A673 (cell line): ENCODE measurements at regions of chr4 and their contacts with region 1.

Region 1: DNA sequence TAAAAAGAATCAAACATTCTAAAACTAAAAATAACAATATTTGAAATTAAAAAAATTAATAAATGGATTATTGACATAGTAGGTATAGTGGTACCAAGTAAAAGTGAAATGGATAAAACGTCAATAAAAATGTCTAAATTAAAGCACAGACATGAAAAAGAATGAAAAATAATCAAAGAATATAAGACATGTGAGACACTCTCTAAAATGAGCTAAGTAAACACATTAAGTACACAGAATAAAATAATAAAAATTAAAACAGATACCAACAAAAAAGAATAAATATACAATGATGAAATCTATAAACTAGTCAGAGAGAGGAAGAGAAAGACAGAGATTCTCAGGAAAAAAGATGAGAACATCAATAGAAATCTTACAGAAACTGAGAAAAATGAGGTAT is 471.6 kb downstream of the PCDH18 start:
- DNase-seq: no peak
- H3K4me3 ChIP-seq: no peak overlapping the region
- H3K27ac ChIP-seq: no peak overlapping the region
- H3K4me1 ChIP-seq: no peaks in the 10 kb centered on the region
- H3K27me3 ChIP-seq: no peaks in the 10 kb centered on the region
- CTCF ChIP-seq: no peak

Region 2: DNA sequence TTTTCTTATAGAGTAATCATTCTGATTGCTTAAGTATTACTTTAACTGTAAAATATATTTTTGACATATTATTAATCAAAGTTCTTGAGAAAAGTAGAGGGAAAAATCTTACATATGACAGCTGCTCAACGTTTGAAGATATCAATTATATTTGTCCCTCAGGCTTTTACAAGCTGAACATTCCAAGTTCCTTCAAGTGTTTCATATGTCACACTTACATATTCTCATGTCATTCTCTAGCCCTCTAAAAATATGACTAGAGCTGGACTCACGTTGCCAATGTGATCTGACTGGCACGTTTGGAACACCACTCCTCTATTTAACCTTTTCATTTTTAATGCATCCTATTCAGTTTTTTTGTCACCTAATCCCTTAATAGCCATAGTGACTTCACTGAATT is 21.3 kb before region 1 on chr4:
- CTCF ChIA-PET with region 1: no interaction called
- POLR2A ChIA-PET with region 1: no interaction called
- intact Hi-C with region 1: loop called (anchors 2 kb)
- DNase-seq: no peak
- H3K4me3 ChIP-seq: no peak overlapping the region
- H3K27ac ChIP-seq: no peak overlapping the region
- H3K4me1 ChIP-seq: no peaks in the 10 kb centered on the region
- H3K27me3 ChIP-seq: no peaks in the 10 kb centered on the region
- CTCF ChIP-seq: no peak